GM12878 (cell line): ENCODE measurements at regions of chr6 and their contacts with region 1.

Region 1: DNA sequence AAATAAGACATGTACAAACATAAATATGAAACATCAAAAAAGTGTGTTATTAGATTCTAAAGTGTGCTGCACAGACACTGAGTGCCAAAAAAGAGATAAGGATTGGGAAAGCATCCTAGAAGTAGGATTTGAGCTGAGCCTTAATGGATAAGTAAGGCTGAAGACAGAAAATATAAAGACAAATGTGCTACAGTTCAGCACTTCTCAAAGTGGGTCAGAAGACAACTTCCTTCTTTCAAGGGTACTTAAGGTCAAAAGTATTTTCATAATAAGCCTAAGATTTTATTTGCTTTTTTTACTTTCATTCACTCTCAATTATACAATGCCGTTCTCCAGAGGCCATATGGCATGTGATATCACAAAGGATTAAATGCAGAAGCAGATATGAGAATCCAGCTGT is 16.8 kb downstream of the USP45 start:
- DNase-seq: no peak
- ATAC-seq: no peak
- H3K4me3 ChIP-seq: no peak overlapping the region
- H3K27ac ChIP-seq: no peak overlapping the region
- H3K4me1 ChIP-seq: no peaks in the 10 kb centered on the region
- H3K27me3 ChIP-seq: no peaks in the 10 kb centered on the region
- CTCF ChIP-seq: no peak
- EP300 ChIP-seq: no peak
- POLR2A ChIP-seq: no peak
- RAD21 ChIP-seq: no peak

Region 2: GRCh38 chr6:99064834-99065233 is 433.6 kb before region 1 on chr6:
- CTCF ChIA-PET with region 1: no interaction called
- POLR2A ChIA-PET with region 1: no interaction called
- RAD21 ChIA-PET with region 1: no interaction called
- SMC1A ChIA-PET with region 1: no interaction called
- in situ Hi-C with region 1: no loop called
- intact Hi-C with region 1: no loop called
- DNase-seq: no peak
- ATAC-seq: no peak
- H3K4me3 ChIP-seq: no peak overlapping the region
- H3K27ac ChIP-seq: no peak overlapping the region
- H3K4me1 ChIP-seq: no peaks in the 10 kb centered on the region
- H3K27me3 ChIP-seq: no peaks in the 10 kb centered on the region; a peak in 1 of 4 replicates
- CTCF ChIP-seq: no peak
- EP300 ChIP-seq: no peak
- POLR2A ChIP-seq: no peak
- RAD21 ChIP-seq: no peak

Region 3: GRCh38 chr6:99543968-99544367 is 45.5 kb after region 1 on chr6:
- CTCF ChIA-PET with region 1: no interaction called
- POLR2A ChIA-PET with region 1: no interaction called
- RAD21 ChIA-PET with region 1: no interaction called
- SMC1A ChIA-PET with region 1: no interaction called
- in situ Hi-C with region 1: no loop called
- intact Hi-C with region 1: loop called (anchors 2 kb)
- DNase-seq: no peak
- ATAC-seq: no peak
- H3K4me3 ChIP-seq: no peak overlapping the region
- H3K27ac ChIP-seq: no peak overlapping the region
- H3K4me1 ChIP-seq: no peaks in the 10 kb centered on the region
- H3K27me3 ChIP-seq: no peaks in the 10 kb centered on the region
- CTCF ChIP-seq: no peak
- EP300 ChIP-seq: no peak
- POLR2A ChIP-seq: no peak
- RAD21 ChIP-seq: no peak